CD4-positive, alpha-beta memory T cell (primary cell): ENCODE measurements at regions of chr18 and their contacts with region 1.

Region 1: GRCh38 chr18:34857320-34857719 is 147.2 kb downstream of the DTNA start:
- DNase-seq: no peak
- H3K4me3 ChIP-seq: no peak overlapping the region
- H3K4me3 Mint-ChIP-seq: no peak overlapping the region
- H3K27ac ChIP-seq: no peak overlapping the region
- H3K27ac Mint-ChIP-seq: no peak overlapping the region
- H3K4me1 ChIP-seq: peaks cover 6% of the 10 kb centered on the region
- H3K4me1 Mint-ChIP-seq: peaks cover 6 to 9% (median 8%) of the 10 kb centered on the region in 4 donors
- H3K27me3 ChIP-seq: no peaks in the 10 kb centered on the region
- H3K27me3 Mint-ChIP-seq: peaks cover 0 to 2% of the 10 kb centered on the region in 2 donors

Region 2: GRCh38 chr18:34729264-34729663 is 128.1 kb before region 1 on chr18:
- CTCF ChIA-PET with region 1: no interaction called
- POLR2A ChIA-PET with region 1: no interaction called
- intact Hi-C with region 1: no loop called
- DNase-seq: no peak
- H3K4me3 ChIP-seq: no peak overlapping the region
- H3K4me3 Mint-ChIP-seq: no peak overlapping the region
- H3K27ac ChIP-seq: no peak overlapping the region
- H3K27ac Mint-ChIP-seq: no peak overlapping the region
- H3K4me1 ChIP-seq: no peaks in the 10 kb centered on the region
- H3K4me1 Mint-ChIP-seq: no peaks in the 10 kb centered on the region
- H3K27me3 ChIP-seq: no peaks in the 10 kb centered on the region
- H3K27me3 Mint-ChIP-seq: peaks cover 0 to 2% of the 10 kb centered on the region in 2 donors

Region 3: DNA sequence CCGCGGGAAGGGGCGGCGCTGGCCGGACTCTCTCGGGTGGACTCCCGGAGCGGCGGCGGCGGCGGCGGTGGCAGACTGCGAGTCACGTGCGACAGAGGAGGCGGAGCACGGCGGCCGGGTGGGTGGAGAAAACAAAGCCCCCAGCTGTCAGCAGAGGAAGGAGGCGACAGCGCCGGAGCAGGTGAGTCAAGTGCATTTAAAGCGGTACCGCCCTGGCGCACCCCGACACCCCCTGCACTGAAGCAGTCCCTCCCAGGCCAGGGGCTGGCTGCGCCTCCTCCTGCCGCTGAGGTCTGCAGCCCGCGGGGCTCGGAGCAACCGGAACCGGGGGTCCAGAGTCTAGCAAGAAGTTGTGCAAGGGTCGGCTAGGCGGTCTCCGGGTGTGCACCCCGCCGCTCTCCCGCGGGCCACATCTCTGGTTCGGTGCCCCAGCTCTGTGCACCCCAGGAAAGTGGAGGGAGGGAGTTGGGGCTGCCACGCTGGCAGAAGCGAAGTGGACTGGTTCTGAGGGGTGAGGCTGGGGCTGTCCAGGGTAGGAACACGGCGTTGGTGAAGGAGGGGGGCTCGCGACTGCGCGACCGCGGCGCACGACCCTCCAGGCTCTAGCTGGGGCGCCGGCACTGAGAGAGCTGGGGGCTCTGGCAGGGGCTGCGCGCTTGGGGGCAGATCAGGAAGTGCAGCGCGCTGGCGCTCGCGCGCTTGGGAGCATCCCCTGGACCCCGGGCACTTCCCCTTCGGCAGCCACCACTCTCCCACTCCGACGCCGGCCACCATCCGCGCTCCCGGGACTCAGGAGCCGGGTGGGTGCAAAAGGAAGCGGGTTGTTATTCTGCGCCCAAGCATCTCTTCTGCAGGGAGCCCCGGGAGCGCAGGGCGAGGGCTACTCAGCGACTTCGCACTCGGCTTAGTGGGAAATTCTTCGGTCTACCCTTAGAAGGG is 119.8 kb after region 1 on chr18:
- CTCF ChIA-PET with region 1: no interaction called
- POLR2A ChIA-PET with region 1: interaction called, 6 read pairs
- intact Hi-C with region 1: loop called (anchors 1 kb)
- DNase-seq: peak; percentile 58 to 81 (median 66)
- H3K4me3 ChIP-seq: peak overlapping the region; percentile 60 to 82
- H3K4me3 Mint-ChIP-seq: peak overlapping the region; percentile 90 to 97 (median 94)
- H3K27ac ChIP-seq: no peak overlapping the region
- H3K27ac Mint-ChIP-seq: peak overlapping the region in 4 of 7 donors; percentile 83 to 90 (median 88)
- H3K4me1 ChIP-seq: peaks cover 14% of the 10 kb centered on the region
- H3K4me1 Mint-ChIP-seq: peaks cover 15 to 30% (median 19%) of the 10 kb centered on the region in 4 donors
- H3K27me3 ChIP-seq: peaks cover 9% of the 10 kb centered on the region
- H3K27me3 Mint-ChIP-seq: peaks cover 10 to 12% of the 10 kb centered on the region in 2 donors

Region 4: GRCh38 chr18:35441857-35442595 is 584.7 kb after region 1 on chr18:
- CTCF ChIA-PET with region 1: no interaction called
- POLR2A ChIA-PET with region 1: no interaction called
- intact Hi-C with region 1: no loop called
- DNase-seq: no peak
- H3K4me3 ChIP-seq: no peak overlapping the region
- H3K4me3 Mint-ChIP-seq: no peak overlapping the region
- H3K27ac ChIP-seq: no peak overlapping the region
- H3K27ac Mint-ChIP-seq: no peak overlapping the region
- H3K4me1 ChIP-seq: no peaks in the 10 kb centered on the region
- H3K4me1 Mint-ChIP-seq: no peaks in the 10 kb centered on the region
- H3K27me3 ChIP-seq: no peaks in the 10 kb centered on the region
- H3K27me3 Mint-ChIP-seq: peaks cover 4 to 6% of the 10 kb centered on the region in 2 donors